ENCODE measurements at regions of chr4 and their contacts with region 1.

Region 1: DNA sequence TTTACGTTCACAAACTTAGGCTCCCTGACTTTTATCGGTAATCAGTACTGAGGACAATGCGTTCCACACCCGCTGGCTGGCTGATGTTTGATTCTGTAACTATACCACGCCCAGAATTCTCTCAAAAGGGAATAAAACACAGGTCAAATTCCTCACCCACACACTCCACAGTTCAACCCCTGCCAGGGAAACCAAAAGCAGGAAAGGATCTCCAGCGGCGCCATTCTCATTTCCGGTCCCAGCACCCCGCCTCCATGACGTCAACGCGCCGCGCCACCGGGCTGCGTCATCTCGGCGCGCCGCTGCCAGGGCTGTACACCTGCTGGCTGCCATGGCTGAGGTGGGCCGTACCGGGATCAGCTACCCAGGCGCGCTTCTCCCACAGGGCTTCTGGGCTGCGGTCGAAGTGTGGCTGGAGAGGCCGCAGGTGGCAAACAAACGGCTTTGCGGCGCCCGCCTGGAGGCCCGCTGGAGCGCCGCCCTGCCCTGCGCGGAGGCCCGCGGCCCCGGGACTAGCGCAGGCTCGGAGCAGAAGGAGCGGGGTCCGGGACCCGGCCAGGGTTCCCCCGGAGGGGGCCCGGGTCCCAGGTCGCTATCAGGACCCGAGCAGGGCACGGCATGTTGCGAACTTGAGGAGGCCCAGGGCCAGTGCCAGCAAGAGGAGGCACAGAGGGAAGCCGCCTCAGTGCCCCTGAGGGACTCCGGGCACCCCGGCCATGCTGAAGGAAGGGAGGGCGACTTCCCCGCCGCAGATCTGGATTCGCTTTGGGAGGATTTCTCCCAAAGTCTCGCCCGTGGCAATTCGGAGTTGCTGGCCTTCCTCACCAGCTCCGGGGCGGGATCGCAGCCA is at the starts of genes ACOX3 and TRMT44:
- DNase-seq: peak; percentile 96
- H3K4me3 Mint-ChIP-seq: peak within 1 kb of the TSS; percentile 93
- H3K27ac Mint-ChIP-seq: peak within 1 kb of the TSS; percentile 95
- H3K4me1 Mint-ChIP-seq: peaks cover 73% of the 10 kb centered on the region
- H3K27me3 Mint-ChIP-seq: no peaks in the 10 kb centered on the region
- total RNA-seq, gene ACOX3: 18.4 and 20.7 TPM in 2 replicates
- total RNA-seq, gene TRMT44: 36.8 and 39.2 TPM in 2 replicates

Region 2: GRCh38 chr4:7101692-7102515 is 1338.8 kb before region 1 on chr4:
- intact Hi-C with region 1: loop called (anchors 2 kb)
- DNase-seq: peak; percentile 29
- H3K4me3 Mint-ChIP-seq: peak overlapping the region; percentile 89
- H3K27ac Mint-ChIP-seq: no peak overlapping the region
- H3K4me1 Mint-ChIP-seq: peaks cover 14% of the 10 kb centered on the region
- H3K27me3 Mint-ChIP-seq: peaks cover 15% of the 10 kb centered on the region

Region 3: DNA sequence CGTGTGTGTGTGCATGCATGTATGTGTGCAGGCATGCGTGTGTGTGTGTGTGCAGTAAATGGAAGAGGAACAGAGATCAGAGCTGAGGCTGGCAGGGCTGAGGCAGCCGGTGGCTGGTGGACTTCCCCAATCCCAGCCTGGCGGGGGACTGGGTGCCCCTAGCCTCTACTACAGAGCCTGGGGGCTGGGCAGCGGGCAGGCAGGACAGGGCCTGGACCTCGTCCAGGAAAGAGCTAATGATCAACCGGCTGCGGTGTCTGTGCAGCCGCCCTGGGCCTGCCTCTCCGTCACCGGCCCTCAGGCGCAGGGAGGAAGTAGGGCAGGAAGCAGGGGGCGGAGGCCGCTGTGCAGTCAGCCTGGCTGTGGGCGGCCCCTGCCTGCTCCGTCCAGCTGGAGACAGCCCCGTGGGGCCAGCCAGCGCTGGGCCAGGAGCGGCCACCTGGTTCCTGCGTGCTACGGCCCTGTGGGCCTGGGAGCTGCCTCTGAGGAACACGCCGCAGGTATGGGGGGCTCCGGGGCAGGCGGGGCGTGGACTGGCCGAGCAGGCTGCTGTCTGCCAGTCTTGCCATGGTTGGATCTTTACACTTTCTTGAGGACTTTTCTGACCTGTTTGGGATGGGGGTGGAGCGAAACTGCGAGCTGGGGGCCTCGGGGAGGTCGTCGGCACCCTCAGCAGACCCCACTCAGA is 241.7 kb before region 1 on chr4 and contains the start of gene SH3TC1:
- intact Hi-C with region 1: loop called (anchors 2 kb)
- DNase-seq: peak; percentile 65
- H3K4me3 Mint-ChIP-seq: peak within 1 kb of the TSS; percentile 89
- H3K27ac Mint-ChIP-seq: peak within 1 kb of the TSS; percentile 95
- H3K4me1 Mint-ChIP-seq: peaks cover 30% of the 10 kb centered on the region
- H3K27me3 Mint-ChIP-seq: peaks cover 1% of the 10 kb centered on the region
- total RNA-seq, gene SH3TC1: 25.4 and 33.6 TPM in 2 replicates

Region 4: GRCh38 chr4:8355864-8356565 is 84.7 kb before region 1 on chr4:
- intact Hi-C with region 1: no loop called
- DNase-seq: no peak
- H3K4me3 Mint-ChIP-seq: no peak overlapping the region
- H3K27ac Mint-ChIP-seq: no peak overlapping the region
- H3K4me1 Mint-ChIP-seq: no peaks in the 10 kb centered on the region
- H3K27me3 Mint-ChIP-seq: no peaks in the 10 kb centered on the region

Region 5: GRCh38 chr4:8419181-8420041 is 21.3 kb before region 1 on chr4:
- intact Hi-C with region 1: loop called (anchors 1 kb)
- DNase-seq: peak; percentile 21
- H3K4me3 Mint-ChIP-seq: peak overlapping the region; percentile 0
- H3K27ac Mint-ChIP-seq: peak overlapping the region; percentile 92
- H3K4me1 Mint-ChIP-seq: peaks cover 18% of the 10 kb centered on the region
- H3K27me3 Mint-ChIP-seq: no peaks in the 10 kb centered on the region

Region 6: DNA sequence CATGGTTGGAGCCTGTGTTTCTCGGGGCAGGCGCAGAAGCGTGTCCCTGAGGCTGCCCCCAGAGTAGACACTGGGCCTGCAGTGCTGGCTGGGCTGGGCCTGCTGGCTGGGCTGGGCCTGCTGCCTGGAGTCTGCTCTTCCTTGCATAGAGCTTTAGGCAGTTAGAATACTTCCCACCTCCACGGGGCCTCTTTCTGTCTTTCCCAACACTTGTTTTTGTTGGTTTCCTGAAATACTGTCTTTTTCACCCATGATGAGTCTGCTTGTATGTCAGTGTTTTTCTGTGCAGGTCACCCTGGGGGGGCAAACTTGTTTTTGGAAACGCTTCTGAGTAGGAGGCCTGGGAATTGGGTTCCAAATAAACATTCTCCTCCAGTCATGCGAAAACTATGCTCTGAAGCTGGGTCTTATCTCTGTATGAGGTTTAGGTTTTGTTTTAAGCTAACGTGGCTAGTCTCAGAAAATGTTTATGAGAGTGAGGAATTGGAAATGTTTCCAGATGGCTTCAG is 32.0 kb after region 1 on chr4:
- intact Hi-C with region 1: no loop called
- DNase-seq: no peak
- H3K4me3 Mint-ChIP-seq: no peak overlapping the region
- H3K27ac Mint-ChIP-seq: no peak overlapping the region
- H3K4me1 Mint-ChIP-seq: no peaks in the 10 kb centered on the region
- H3K27me3 Mint-ChIP-seq: no peaks in the 10 kb centered on the region

Region 7: GRCh38 chr4:8537041-8537552 is 96.4 kb after region 1 on chr4:
- intact Hi-C with region 1: no loop called
- DNase-seq: no peak
- H3K4me3 Mint-ChIP-seq: no peak overlapping the region
- H3K27ac Mint-ChIP-seq: no peak overlapping the region
- H3K4me1 Mint-ChIP-seq: peaks cover 18% of the 10 kb centered on the region
- H3K27me3 Mint-ChIP-seq: no peaks in the 10 kb centered on the region